ENCODE measurements at regions of chr21 and their contacts with region 1.

Region 1: DNA sequence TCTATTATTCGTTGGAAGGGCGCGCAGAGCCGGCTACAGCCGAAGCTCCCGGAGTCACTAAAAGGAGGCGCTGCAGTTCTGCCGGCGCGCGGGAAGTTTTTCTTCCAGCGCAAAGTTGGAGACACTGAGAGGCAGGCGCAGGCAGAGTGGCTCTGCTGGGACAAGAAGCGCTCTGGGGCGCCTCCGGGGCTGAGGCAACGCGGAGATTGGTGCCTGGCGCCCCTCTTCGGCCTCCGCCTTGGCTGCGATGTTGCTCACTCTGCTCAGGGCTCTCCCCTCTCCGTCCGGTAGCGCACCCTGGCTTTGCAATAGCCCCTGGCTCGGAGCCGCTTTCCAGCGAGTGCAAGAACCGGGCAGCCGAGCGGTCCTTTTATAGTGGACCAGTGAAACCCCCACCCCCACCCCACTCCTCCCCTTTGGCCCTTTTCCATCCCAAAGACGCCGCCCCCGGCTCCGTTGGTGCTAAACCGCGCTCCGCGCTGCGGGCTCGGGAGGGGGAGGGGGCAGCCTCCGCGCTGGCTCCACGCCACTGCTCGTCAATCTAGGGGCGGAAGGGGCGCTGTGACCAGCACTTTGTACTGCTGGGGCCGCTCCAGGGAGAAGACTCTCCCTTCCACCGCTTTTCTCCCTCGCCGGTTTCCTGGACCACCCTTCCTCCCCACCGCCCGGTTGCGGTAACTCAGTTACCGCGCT is at the start of gene ADAMTS1:
- DNase-seq: no peak
- ATAC-seq: peak; percentile 40; the same call in 2 of the 3 replicates
- H3K4me3 ChIP-seq: no peak within 1 kb of the TSS
- H3K27ac ChIP-seq: no peak within 1 kb of the TSS
- H3K4me1 ChIP-seq: no peaks in the 10 kb centered on the region; a peak in 1 of 5 replicates
- H3K27me3 ChIP-seq: no peaks in the 10 kb centered on the region
- CTCF ChIP-seq: no peak
- EP300 ChIP-seq: no peak
- POLR2A ChIP-seq: no peak
- RAD21 ChIP-seq: no peak
- polyA plus RNA-seq, gene ADAMTS1: not detected

Region 2: DNA sequence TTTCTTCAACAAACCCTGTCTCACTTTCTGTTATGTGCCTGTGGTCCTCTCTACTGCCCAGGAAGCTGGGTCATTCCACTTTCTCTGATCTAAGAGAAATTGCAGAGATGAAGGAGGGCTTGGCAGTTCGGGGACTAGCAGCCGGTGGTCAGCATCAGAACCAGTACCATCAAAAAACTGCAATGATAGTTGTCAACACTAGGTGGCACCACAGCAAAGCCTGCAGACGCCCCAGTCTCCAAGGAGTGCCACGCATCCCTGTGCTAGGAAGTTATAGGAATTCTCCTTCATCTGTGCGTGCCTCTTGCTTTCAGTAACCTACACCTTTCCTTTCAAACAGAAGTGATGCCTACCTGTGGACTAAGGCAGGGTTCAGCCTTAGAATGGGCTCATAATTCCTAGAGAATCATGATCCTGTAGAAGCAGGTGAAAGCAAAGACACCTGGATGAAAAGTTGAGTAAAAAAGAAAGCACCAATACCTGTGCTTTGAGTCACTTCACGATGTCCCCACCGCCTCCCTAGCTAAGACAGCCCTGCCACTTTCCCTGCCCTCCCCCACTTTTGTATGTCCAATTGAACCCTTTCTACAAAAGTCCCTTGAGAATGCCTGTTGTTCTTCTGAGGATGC is 129.2 kb before region 1 on chr21:
- CTCF ChIA-PET with region 1: no interaction called
- POLR2A ChIA-PET with region 1: no interaction called
- in situ Hi-C with region 1: no loop called
- intact Hi-C with region 1: no loop called
- DNase-seq: peak; percentile 19 to 45 (median 33)
- ATAC-seq: peak; percentile 64; the same call in 1 of the 3 replicates
- H3K4me3 ChIP-seq: no peak overlapping the region
- H3K27ac ChIP-seq: no peak overlapping the region
- H3K4me1 ChIP-seq: no peaks in the 10 kb centered on the region
- H3K27me3 ChIP-seq: no peaks in the 10 kb centered on the region
- CTCF ChIP-seq: peak; percentile 39 to 51 (median 50); a peak in 5 of 6 replicates
- EP300 ChIP-seq: no peak
- POLR2A ChIP-seq: no peak
- RAD21 ChIP-seq: 0 out of 4 replicates have a peak, but pooled peaks of 1 of the 2 experiments have one; percentile 25

Region 3: GRCh38 chr21:27700974-27701614 is 855.9 kb after region 1 on chr21:
- CTCF ChIA-PET with region 1: interaction called, 47 read pairs
- POLR2A ChIA-PET with region 1: no interaction called
- in situ Hi-C with region 1: loop called (anchors 5 kb)
- intact Hi-C with region 1: loop called (anchors 1 kb)
- DNase-seq: peak; percentile 34 to 65 (median 50)
- ATAC-seq: peak; percentile 68
- H3K4me3 ChIP-seq: no peak overlapping the region
- H3K27ac ChIP-seq: no peak overlapping the region
- H3K4me1 ChIP-seq: no peaks in the 10 kb centered on the region
- H3K27me3 ChIP-seq: no peaks in the 10 kb centered on the region
- CTCF ChIP-seq: peak; percentile 73 to 80 (median 75)
- EP300 ChIP-seq: no peak
- POLR2A ChIP-seq: no peak
- RAD21 ChIP-seq: peak; percentile 84 to 88

Region 4: DNA sequence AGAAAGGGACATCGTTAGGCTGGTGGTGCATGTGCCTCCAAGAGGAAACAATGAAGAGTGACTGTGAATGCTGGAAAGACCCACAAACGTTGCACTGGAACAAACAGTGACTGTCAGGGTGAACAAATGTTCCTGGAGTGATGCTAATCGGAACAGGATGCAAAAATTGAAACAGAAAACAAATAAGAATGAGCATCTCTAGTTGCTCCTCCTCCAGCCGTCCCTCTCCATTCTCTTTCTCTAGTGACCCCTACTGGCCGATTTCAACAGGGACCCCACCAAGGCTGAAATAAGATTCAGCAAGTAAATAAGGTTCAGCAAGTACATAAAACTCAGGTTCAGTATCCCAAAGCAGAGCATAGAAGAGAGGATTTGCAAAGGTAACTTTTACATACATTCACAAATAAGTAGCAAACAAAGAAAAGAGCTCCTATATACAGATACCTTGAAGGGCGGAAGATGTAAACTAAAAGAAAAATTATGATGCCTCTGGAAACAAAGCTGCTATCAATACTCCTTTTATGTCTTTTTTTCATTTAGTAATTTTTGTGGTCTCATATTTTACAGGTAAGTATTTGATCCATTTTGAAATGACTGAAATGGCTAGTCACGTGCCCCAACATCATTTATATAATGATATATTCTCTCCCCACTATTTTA is 957.7 kb after region 1 on chr21:
- CTCF ChIA-PET with region 1: no interaction called
- POLR2A ChIA-PET with region 1: no interaction called
- in situ Hi-C with region 1: no loop called
- intact Hi-C with region 1: loop called (anchors 5 kb)
- DNase-seq: peak; percentile 31 to 40 (median 34)
- ATAC-seq: peak; percentile 31; the same call in 1 of the 3 replicates
- H3K4me3 ChIP-seq: no peak overlapping the region
- H3K27ac ChIP-seq: no peak overlapping the region
- H3K4me1 ChIP-seq: no peaks in the 10 kb centered on the region
- H3K27me3 ChIP-seq: no peaks in the 10 kb centered on the region
- CTCF ChIP-seq: peak; percentile 5 to 56 (median 33); a peak in 3 of 6 replicates
- EP300 ChIP-seq: no peak
- POLR2A ChIP-seq: no peak
- RAD21 ChIP-seq: 0 out of 4 replicates have a peak, but pooled peaks of 1 of the 2 experiments have one; percentile 13

Region 5: GRCh38 chr21:28336314-28336713 is 1491.1 kb after region 1 on chr21:
- CTCF ChIA-PET with region 1: no interaction called
- POLR2A ChIA-PET with region 1: no interaction called
- in situ Hi-C with region 1: no loop called
- intact Hi-C with region 1: loop called (anchors 5 kb)
- DNase-seq: no peak
- ATAC-seq: no peak
- H3K4me3 ChIP-seq: no peak overlapping the region
- H3K27ac ChIP-seq: no peak overlapping the region
- H3K4me1 ChIP-seq: no peaks in the 10 kb centered on the region
- H3K27me3 ChIP-seq: no peaks in the 10 kb centered on the region
- CTCF ChIP-seq: no peak
- EP300 ChIP-seq: no peak
- POLR2A ChIP-seq: no peak
- RAD21 ChIP-seq: peak in 1 of 2 experiments; percentile 28; a peak in 1 of 4 replicates

Region 6: DNA sequence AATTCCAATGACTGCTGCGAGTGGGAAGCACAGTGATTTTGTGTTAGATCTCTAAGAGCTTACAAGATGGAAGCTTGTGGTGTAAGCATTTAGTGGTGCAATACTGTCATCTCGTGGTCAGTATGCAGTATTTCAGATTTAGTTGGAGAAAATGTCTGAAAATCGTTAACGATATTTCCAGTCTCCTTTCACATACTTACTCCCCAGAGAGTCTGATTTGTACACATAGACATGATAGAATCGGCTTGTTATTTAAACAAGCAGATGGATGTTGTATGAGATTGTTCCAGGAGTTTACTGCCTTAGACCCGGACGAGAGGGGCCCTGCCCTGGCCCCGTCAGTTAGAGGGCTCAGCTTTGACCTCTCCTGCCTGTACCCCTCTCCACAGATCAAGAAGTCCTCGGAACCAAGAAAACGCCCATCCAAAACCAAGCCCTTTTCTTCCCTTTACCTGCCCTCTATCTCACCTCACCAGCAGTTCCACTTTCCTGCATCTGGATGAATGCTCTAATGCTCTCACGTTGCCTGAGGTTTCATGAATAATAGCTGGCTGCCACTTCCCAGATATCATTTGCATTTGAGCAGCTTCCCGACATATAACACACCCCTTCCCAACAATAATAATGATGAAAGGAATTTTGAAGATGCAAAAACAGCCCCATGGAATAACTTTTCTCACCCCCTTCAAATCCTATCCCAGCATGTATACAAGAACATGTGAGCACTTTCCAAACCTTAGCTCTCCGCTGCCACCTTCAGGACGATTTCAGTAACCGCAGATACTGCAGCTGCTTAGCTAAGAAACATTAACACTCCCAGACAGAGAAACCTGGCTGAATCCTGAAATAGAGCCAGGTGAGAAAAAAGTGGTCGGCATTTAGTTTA is 1900.2 kb after region 1 on chr21:
- CTCF ChIA-PET with region 1: interaction called, 93 read pairs
- POLR2A ChIA-PET with region 1: interaction called, 5 read pairs
- in situ Hi-C with region 1: loop called (anchors 5 kb)
- intact Hi-C with region 1: loop called (anchors 1 kb)
- DNase-seq: peak; percentile 65 to 82 (median 78)
- ATAC-seq: peak; percentile 97
- H3K4me3 ChIP-seq: no peak overlapping the region
- H3K27ac ChIP-seq: no peak overlapping the region
- H3K4me1 ChIP-seq: no peaks in the 10 kb centered on the region
- H3K27me3 ChIP-seq: no peaks in the 10 kb centered on the region
- CTCF ChIP-seq: peak; percentile 84 to 99 (median 91)
- EP300 ChIP-seq: no peak
- POLR2A ChIP-seq: no peak
- RAD21 ChIP-seq: peak; percentile 97 to 99

Region 7: GRCh38 chr21:28793043-28793442 is 1947.8 kb after region 1 on chr21:
- CTCF ChIA-PET with region 1: interaction called, 16 read pairs
- POLR2A ChIA-PET with region 1: no interaction called
- in situ Hi-C with region 1: no loop called
- intact Hi-C with region 1: no loop called
- DNase-seq: peak in 1 of 4 experiments; percentile 30
- ATAC-seq: 0 out of 3 replicates have a peak, but pooled peaks have one; percentile 23
- H3K4me3 ChIP-seq: no peak overlapping the region
- H3K27ac ChIP-seq: no peak overlapping the region
- H3K4me1 ChIP-seq: no peaks in the 10 kb centered on the region; a peak in 1 of 5 replicates
- H3K27me3 ChIP-seq: no peaks in the 10 kb centered on the region
- CTCF ChIP-seq: peak; percentile 34 to 57 (median 34); a peak in 3 of 6 replicates
- EP300 ChIP-seq: no peak
- POLR2A ChIP-seq: no peak
- RAD21 ChIP-seq: peak; percentile 75

Measured in K562 (cell line).